Activated naive CD4-positive, alpha-beta T cell treated with anti-CD3 and anti-CD28 coated beads for 36 hours (primary cell): ENCODE measurements at regions of chr12 and their contacts with region 1.

Region 1: GRCh38 chr12:113070117-113070906 is 13.8 kb downstream of the DTX1 start:
- DNase-seq: peak; percentile 90
- H3K4me3 Mint-ChIP-seq: peak overlapping the region; percentile 54
- H3K27ac Mint-ChIP-seq: peak overlapping the region; percentile 83
- H3K4me1 Mint-ChIP-seq: peaks cover 64% of the 10 kb centered on the region
- H3K27me3 Mint-ChIP-seq: no peaks in the 10 kb centered on the region

Region 2: GRCh38 chr12:113092607-113093408 is 22.5 kb after region 1 on chr12:
- CTCF ChIA-PET with region 1: interaction called, 6 read pairs
- intact Hi-C with region 1: loop called (anchors 1 kb)
- DNase-seq: peak; percentile 30
- H3K4me3 Mint-ChIP-seq: no peak overlapping the region
- H3K27ac Mint-ChIP-seq: no peak overlapping the region
- H3K4me1 Mint-ChIP-seq: peaks cover 53% of the 10 kb centered on the region
- H3K27me3 Mint-ChIP-seq: no peaks in the 10 kb centered on the region

Region 3: DNA sequence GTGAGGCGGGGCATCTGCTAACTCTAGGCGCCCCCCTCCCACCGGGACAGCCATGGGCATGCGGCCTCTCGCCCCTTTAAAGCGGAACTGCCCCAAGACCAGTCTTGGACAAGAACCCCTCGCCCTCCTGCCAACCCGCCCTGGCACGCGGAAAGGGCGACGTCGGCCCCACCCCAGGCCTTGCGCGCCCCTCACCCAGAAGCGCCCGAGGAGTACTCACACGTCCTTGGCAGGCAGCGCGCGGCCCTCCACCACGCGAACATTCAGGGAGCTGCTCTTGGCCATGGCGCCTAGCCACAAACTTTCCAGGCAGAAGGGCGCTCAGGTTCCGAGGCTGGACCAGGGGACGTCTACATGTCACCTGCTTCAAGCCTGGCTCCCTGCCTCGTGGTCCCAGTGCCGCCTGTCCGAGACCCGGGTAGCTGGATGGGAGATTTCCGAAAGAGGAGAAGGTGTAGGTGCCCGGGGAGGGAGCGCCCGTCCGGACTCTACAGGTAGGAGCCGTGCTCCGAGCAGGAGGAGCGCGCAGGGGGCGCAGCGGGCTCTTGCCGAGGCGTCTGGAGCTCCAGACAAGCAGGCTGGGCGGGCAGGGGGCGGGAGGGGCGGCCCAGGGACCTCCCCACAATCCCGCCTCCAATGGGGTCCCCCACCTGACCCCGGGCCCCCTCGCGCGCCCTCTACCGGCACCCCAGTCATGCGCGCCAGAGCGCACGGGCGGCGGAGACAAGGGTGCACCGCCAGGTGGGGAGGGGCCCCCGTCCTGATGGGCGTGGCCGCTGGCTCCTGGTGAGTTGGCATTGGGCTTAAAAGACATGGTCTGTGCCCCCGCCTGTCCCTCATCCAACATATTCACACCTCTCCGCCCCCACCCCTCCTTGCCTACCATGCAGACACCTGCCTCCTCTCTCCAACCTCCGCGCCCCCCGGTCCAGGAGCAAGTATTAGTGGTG is 65.1 kb after region 1 on chr12 and contains the start of gene RASAL1:
- CTCF ChIA-PET with region 1: no interaction called
- intact Hi-C with region 1: no loop called
- DNase-seq: peak; percentile 90
- H3K4me3 Mint-ChIP-seq: peak within 1 kb of the TSS; percentile 70
- H3K27ac Mint-ChIP-seq: peak within 1 kb of the TSS; percentile 73
- H3K4me1 Mint-ChIP-seq: peaks cover 18% of the 10 kb centered on the region
- H3K27me3 Mint-ChIP-seq: no peaks in the 10 kb centered on the region
- total RNA-seq, gene RASAL1: 2.6 to 3.2 TPM